ENCODE measurements at regions of chr12 and their contacts with region 1.

Region 1: GRCh38 chr12:44331269-44331668 is 495.4 kb downstream of the TMEM117 start:
- DNase-seq: peak; percentile 40 to 51
- H3K4me3 ChIP-seq: no peak overlapping the region
- H3K4me3 Mint-ChIP-seq: no peak overlapping the region
- H3K27ac Mint-ChIP-seq: no peak overlapping the region
- H3K4me1 ChIP-seq: peaks cover 21% of the 10 kb centered on the region
- H3K4me1 Mint-ChIP-seq: peaks cover 7% of the 10 kb centered on the region
- H3K27me3 ChIP-seq: no peaks in the 10 kb centered on the region
- H3K27me3 Mint-ChIP-seq: no peaks in the 10 kb centered on the region
- CTCF ChIP-seq: no peak

Region 2: DNA sequence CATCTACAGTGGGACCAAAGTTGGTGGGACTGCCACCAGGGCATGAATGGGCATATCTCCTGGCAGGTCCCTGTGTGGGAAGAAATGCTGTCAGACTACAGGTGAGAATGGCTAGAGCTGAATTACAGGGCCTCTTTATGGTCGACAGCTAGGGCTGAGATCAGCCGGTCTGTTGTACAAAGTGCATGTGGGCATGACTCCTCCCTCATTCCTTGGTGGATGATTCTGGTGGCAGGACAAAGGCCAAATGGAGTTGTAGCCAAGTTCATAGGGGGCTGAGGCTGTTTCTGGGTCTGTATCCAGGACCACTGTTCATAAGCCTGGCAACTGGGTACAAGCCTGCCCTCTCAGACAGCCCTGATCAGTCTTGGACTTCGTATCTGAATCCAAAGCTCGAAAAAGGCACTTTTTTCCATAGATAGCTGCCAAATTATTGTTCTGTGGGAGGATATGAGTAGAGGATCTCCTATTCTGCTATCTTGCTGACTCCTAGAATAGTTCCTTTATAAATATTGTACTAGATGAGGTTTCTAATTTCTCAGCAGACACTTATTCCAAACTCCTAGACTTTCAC is 34.6 kb before region 1 on chr12:
- CTCF ChIA-PET with region 1: no interaction called
- POLR2A ChIA-PET with region 1: no interaction called
- intact Hi-C with region 1: loop called (anchors 1 kb)
- DNase-seq: peak; percentile 65 to 84
- H3K4me3 ChIP-seq: no peak overlapping the region
- H3K4me3 Mint-ChIP-seq: peak overlapping the region; percentile 35
- H3K27ac Mint-ChIP-seq: peak overlapping the region; percentile 79
- H3K4me1 ChIP-seq: peaks cover 27% of the 10 kb centered on the region
- H3K4me1 Mint-ChIP-seq: no peaks in the 10 kb centered on the region
- H3K27me3 ChIP-seq: no peaks in the 10 kb centered on the region
- H3K27me3 Mint-ChIP-seq: no peaks in the 10 kb centered on the region
- CTCF ChIP-seq: no peak

Region 3: GRCh38 chr12:44372259-44372658 is 41.0 kb after region 1 on chr12:
- CTCF ChIA-PET with region 1: no interaction called
- POLR2A ChIA-PET with region 1: no interaction called
- intact Hi-C with region 1: no loop called
- DNase-seq: no peak
- H3K4me3 ChIP-seq: no peak overlapping the region
- H3K4me3 Mint-ChIP-seq: no peak overlapping the region
- H3K27ac Mint-ChIP-seq: no peak overlapping the region
- H3K4me1 ChIP-seq: no peaks in the 10 kb centered on the region; the same call in none of the 2 replicates
- H3K4me1 Mint-ChIP-seq: peaks cover 27% of the 10 kb centered on the region
- H3K27me3 ChIP-seq: no peaks in the 10 kb centered on the region
- H3K27me3 Mint-ChIP-seq: no peaks in the 10 kb centered on the region
- CTCF ChIP-seq: no peak

Region 4: DNA sequence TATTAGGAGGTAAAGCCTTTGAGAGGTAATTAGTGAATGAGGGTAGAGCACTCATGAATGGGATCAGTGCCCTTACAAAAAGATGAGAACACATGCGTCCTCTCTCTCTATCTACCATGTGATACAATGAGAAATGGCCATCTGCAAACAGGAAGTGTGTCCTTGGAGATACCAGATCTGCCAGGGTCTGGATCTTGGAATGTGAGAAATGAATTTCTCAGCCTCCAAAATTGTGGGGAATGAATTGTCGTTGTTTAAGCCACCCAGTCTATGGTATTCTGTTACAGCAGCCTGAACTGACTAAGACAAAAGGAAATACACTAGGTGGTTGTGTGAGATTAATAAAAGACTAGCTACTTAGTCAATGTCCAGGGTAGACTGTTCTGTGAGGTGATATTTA is 178.2 kb after region 1 on chr12:
- CTCF ChIA-PET with region 1: no interaction called
- POLR2A ChIA-PET with region 1: no interaction called
- intact Hi-C with region 1: no loop called
- DNase-seq: no peak
- H3K4me3 ChIP-seq: no peak overlapping the region
- H3K4me3 Mint-ChIP-seq: no peak overlapping the region
- H3K27ac Mint-ChIP-seq: no peak overlapping the region
- H3K4me1 ChIP-seq: no peaks in the 10 kb centered on the region
- H3K4me1 Mint-ChIP-seq: peaks cover 2% of the 10 kb centered on the region
- H3K27me3 ChIP-seq: no peaks in the 10 kb centered on the region
- H3K27me3 Mint-ChIP-seq: peaks cover 5% of the 10 kb centered on the region
- CTCF ChIP-seq: no peak

Measured in Caco-2 (cell line).